ENCODE measurements at regions of chr18 and their contacts with region 1.

Region 1: GRCh38 chr18:10851824-10852319 is 297.5 kb downstream of the PIEZO2 start:
- DNase-seq: peak; percentile 10
- H3K4me3 ChIP-seq: no peak overlapping the region
- H3K27ac ChIP-seq: no peak overlapping the region
- H3K4me1 ChIP-seq: no peaks in the 10 kb centered on the region
- H3K27me3 ChIP-seq: no peaks in the 10 kb centered on the region
- CTCF ChIP-seq: peak; percentile 60 to 67

Region 2: DNA sequence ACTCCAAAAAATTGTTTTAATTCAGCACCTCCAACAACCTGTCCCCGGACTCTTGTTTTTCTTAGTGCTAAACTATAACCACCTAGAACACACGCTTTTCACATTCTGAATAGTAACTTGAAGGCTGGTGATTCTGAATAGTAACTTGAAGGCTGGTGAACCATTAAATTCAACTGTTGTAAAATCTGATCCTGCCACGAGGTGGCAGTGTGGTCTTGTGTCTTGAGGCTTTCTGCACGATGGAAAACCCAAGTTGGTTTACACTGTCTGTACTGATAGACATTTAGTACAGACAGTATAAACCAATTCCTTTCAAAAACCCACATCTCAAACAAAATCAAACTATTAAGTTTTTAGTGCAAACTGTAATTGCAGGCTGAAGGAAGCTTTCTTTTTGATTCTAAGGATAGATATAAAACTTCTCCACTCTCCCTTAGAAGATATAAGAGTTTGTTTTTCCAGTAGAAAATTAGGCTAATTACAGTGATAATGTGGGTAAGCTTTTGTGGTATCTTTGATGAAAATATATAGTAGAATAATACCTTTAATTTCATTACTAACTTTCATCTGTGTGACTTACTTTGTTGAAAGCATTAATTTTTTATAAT is 880.5 kb before region 1 on chr18:
- CTCF ChIA-PET with region 1: no interaction called
- dilution Hi-C with region 1: no loop called
- in situ Hi-C with region 1: no loop called
- intact Hi-C with region 1: loop called (anchors 10 kb)
- DNase-seq: peak; percentile 63
- H3K4me3 ChIP-seq: no peak overlapping the region
- H3K27ac ChIP-seq: no peak overlapping the region
- H3K4me1 ChIP-seq: no peaks in the 10 kb centered on the region
- H3K27me3 ChIP-seq: no peaks in the 10 kb centered on the region
- CTCF ChIP-seq: peak; percentile 59 to 70

Region 3: DNA sequence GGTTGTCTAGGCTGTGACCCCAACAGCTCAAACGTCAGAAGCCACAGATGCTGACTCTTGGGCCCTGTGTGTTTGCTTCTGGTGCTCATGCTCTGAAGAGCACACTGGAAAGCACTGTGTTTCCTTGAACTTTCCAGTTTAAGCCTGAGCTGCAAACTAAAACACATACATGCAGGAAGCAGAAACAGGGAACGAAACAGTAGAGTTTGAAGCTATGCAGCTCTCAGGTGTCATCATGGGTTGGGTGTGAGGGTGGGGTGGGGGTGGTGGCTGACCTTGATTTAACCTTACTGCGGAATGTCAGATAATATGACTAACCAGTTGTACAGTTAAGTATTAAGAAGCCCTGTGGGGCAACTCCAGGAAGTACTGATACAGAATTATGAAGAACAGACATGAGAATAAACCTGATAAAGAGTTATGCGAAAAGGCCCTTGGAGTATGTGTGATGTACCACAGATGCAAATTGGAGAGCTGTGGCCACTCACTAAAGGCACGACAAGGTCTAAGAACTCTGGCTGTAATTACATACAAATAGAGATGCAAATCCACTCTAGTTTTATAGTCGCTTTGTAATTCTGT is 53.1 kb before region 1 on chr18:
- CTCF ChIA-PET with region 1: interaction called, 16 read pairs
- dilution Hi-C with region 1: no loop called
- in situ Hi-C with region 1: no loop called
- intact Hi-C with region 1: no loop called
- DNase-seq: no peak
- H3K4me3 ChIP-seq: no peak overlapping the region
- H3K27ac ChIP-seq: no peak overlapping the region
- H3K4me1 ChIP-seq: no peaks in the 10 kb centered on the region
- H3K27me3 ChIP-seq: no peaks in the 10 kb centered on the region
- CTCF ChIP-seq: no peak

Region 4: DNA sequence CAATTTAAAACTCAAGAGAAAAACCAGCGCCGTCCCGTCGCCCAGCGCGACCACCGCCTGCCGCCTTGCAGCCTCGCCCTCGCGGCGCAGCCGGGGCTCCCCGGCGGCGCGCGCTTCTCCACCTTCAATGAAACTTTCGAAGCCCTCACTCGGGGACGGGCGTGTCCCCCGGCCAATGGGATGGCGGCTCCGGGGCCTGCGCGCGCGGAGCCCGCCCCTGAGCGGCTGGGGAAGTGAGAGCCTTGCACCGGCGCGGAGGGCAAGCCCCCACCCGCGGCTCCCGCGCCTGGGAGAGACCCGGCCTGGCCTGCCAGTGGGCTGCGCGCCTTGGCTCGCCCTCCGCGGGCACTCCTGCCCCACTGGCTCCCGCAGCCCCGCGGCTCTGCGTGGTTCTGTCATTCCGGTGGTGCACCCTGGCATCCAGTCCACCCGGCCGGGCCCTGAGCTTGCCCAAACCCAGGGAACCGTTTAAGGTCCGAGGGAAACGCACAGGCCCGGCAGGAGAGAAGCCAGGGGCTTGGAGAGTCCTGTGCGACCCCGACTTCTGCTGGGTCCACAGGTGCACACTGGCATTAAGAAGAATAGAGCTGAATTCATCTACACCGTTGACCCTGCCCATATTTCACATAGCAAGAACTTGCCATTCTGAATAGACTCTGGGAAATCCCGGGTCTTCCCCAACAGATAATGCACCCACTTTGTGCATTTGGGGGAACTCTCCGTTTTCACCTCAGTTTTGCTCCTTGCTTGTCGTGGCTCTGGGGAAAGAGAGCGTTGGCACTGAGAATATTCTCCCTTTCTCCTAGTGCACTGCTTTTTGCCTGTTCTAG is 297.8 kb after region 1 on chr18 and contains the start of gene PIEZO2:
- CTCF ChIA-PET with region 1: no interaction called
- dilution Hi-C with region 1: no loop called
- in situ Hi-C with region 1: no loop called
- intact Hi-C with region 1: loop called (anchors 2 kb)
- DNase-seq: no peak
- H3K4me3 ChIP-seq: no peak within 1 kb of the TSS
- H3K27ac ChIP-seq: no peak within 1 kb of the TSS
- H3K4me1 ChIP-seq: no peaks in the 10 kb centered on the region
- H3K27me3 ChIP-seq: peaks cover 4% of the 10 kb centered on the region
- CTCF ChIP-seq: no peak
- total RNA-seq, gene PIEZO2: 1.3 TPM in 1 of 2 donors, not detected in the other

Region 5: DNA sequence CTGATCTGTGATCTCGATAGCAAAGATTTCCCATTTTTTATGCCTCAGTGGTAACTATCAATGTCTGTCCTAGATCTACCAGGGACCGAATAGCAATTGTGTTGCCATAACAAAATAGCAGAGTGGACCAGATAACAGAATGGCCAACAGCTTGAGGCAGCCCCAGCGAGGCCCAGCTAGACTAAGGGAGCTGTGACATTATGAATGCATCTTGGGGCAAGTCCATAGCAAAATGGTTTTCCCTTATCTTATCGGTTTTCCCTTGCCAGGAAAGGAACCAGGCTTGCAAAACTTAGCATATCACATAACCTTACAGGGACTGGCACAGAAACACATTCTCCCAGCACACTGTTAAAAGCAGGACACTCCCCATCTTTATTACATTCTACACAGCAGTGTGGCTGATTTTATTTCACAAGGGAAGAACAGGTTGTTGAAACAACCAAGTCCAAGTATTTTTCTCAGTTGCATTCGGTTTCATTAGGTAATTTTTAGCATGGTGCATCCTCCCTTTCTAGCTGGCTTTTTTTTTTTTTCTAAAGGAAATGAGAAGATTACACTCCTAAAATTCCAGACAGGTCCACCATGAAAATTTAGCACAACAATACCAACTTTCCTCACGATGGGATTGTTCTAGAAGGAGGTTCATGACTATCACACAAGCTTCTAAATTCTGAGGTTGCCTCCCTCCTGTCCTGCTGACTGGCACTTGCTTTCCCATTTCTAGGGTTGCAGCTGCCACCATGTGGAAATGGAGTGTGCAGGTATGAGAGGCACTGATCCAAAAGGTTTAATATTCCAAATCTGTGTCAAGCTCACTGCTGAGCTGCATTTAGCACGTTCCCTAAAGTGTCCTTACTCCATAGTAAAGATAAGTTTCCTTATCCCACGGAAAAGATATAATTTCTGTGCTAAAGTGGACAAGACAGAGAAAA is 660.5 kb after region 1 on chr18:
- CTCF ChIA-PET with region 1: interaction called, 5 read pairs
- dilution Hi-C with region 1: no loop called
- in situ Hi-C with region 1: loop called in 1 of 2 experiments (anchors 5 kb)
- intact Hi-C with region 1: loop called (anchors 1 kb)
- DNase-seq: peak; percentile 51
- H3K4me3 ChIP-seq: no peak overlapping the region
- H3K27ac ChIP-seq: no peak overlapping the region
- H3K4me1 ChIP-seq: no peaks in the 10 kb centered on the region
- H3K27me3 ChIP-seq: no peaks in the 10 kb centered on the region
- CTCF ChIP-seq: peak; percentile 76 to 81